Posterior cingulate gyrus (tissue), 11 donors: ENCODE measurements at regions of chr2 and their contacts with region 1.

Region 1: GRCh38 chr2:211035548-211036185 is 479.3 kb downstream of the CPS1 start:
- DNase-seq: peak in 1 of 10 donors; percentile 11

Region 2: GRCh38 chr2:210626849-210627248 is 408.8 kb before region 1 on chr2:
- intact Hi-C with region 1: loop called (anchors 10 kb)
- DNase-seq: no peak

Region 3: GRCh38 chr2:210663631-210664089 is 372.0 kb before region 1 on chr2:
- intact Hi-C with region 1: loop called (anchors 10 kb)
- DNase-seq: peak in 1 of 10 donors; percentile 11

Region 4: DNA sequence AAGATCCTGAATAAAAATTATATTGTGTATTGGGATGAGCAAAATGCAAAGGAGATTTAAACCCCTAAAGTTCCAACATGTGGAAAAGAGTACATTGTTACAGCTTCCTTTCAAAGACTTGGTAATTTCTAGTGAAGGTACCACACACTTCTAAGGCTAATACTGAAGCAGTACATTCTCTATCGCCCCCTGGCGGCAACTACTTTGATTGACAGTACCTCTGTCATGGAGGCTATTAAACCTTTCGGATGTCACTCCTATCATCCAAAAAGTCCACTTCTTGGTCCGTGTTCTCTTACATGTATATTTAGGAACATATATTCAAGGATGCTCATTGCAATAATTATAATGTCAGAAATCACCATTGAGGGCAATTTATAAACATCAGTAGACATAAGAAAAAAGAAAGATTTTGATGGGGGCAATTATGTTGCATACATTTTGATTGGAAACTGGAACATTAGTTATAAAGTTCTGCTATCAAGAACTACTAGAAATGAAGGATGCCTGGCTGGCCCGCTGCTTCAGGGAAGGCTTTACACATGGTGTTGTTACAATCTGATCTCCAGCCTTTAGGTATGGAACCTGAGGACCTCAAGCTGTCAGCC is 122.3 kb after region 1 on chr2:
- intact Hi-C with region 1: loop called (anchors 5 kb)
- DNase-seq: peak in 9 of 10 donors; percentile 40 to 91 (median 81)